Caco-2 (cell line): ENCODE measurements at regions of chr17 and their contacts with region 1.

Region 1: GRCh38 chr17:65723385-65724151 is 162.1 kb upstream of the AXIN2 start:
- DNase-seq: no peak
- H3K4me3 ChIP-seq: no peak overlapping the region
- H3K4me3 Mint-ChIP-seq: no peak overlapping the region
- H3K27ac Mint-ChIP-seq: no peak overlapping the region
- H3K4me1 ChIP-seq: peaks cover 20% of the 10 kb centered on the region
- H3K4me1 Mint-ChIP-seq: peaks cover 40% of the 10 kb centered on the region
- H3K27me3 ChIP-seq: no peaks in the 10 kb centered on the region
- H3K27me3 Mint-ChIP-seq: no peaks in the 10 kb centered on the region
- CTCF ChIP-seq: no peak

Region 2: DNA sequence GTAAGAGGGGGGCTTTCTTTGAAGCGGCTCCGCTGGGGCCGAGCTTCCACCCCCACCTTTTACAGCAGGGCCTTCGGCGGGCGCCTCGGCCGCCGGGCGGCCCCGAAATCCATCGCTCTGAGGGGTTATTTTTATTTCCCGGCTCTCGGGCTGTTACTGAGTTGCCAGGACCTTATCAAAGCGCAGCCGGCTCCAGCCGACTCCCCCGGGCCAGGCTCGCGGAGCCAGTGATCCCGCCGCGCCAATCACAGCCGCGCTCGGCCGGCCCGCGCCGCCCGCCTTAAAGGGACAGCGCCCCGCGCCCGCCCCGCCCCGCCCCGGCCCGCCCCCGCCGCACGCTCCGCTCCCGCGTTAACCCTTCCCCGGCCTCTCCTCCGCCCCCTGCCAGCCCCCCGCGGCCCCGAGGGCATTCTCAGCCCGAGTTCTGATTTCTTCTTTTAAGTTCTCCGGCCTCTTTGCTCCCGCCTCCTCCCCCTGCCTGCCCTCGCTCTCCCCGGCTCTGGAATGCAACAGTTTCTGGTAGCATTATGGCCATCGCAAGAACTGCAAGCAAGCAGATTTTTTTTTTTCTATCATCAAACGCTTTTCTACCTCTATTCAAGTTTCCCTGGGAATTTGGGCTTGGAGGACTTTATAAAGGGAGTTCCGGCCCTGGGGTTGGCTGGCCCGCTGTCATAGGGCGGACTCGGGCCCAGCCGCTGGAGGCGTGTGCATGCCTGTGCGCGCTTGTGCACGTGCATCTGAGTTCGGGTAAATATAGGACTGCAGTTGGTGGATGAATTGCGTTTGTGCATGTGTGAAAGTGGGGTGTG is 162.0 kb before region 1 on chr17 and contains the start of gene AXIN2:
- CTCF ChIA-PET with region 1: no interaction called
- POLR2A ChIA-PET with region 1: no interaction called
- intact Hi-C with region 1: loop called (anchors 1 kb)
- DNase-seq: peak; percentile 96 to 97
- H3K4me3 ChIP-seq: peak within 1 kb of the TSS; percentile 86
- H3K4me3 Mint-ChIP-seq: no peak within 1 kb of the TSS
- H3K27ac Mint-ChIP-seq: peak within 1 kb of the TSS; percentile 91
- H3K4me1 ChIP-seq: peaks cover 44% of the 10 kb centered on the region
- H3K4me1 Mint-ChIP-seq: peaks cover 24% of the 10 kb centered on the region
- H3K27me3 ChIP-seq: no peaks in the 10 kb centered on the region
- H3K27me3 Mint-ChIP-seq: no peaks in the 10 kb centered on the region
- CTCF ChIP-seq: peak; percentile 25 to 33
- total RNA-seq, gene AXIN2: 141 and 168 TPM in 2 replicates

Region 3: GRCh38 chr17:65966072-65966695 is 242.6 kb after region 1 on chr17:
- CTCF ChIA-PET with region 1: no interaction called
- POLR2A ChIA-PET with region 1: no interaction called
- intact Hi-C with region 1: no loop called
- DNase-seq: no peak
- H3K4me3 ChIP-seq: no peak overlapping the region
- H3K4me3 Mint-ChIP-seq: no peak overlapping the region
- H3K27ac Mint-ChIP-seq: no peak overlapping the region
- H3K4me1 ChIP-seq: no peaks in the 10 kb centered on the region
- H3K4me1 Mint-ChIP-seq: no peaks in the 10 kb centered on the region
- H3K27me3 ChIP-seq: no peaks in the 10 kb centered on the region
- H3K27me3 Mint-ChIP-seq: no peaks in the 10 kb centered on the region
- CTCF ChIP-seq: no peak